Activated B cell treated with CpG ODN at 0.5 μM for 24 hours (primary cell): ENCODE measurements at regions of chr10 and their contacts with region 1.

Region 1: DNA sequence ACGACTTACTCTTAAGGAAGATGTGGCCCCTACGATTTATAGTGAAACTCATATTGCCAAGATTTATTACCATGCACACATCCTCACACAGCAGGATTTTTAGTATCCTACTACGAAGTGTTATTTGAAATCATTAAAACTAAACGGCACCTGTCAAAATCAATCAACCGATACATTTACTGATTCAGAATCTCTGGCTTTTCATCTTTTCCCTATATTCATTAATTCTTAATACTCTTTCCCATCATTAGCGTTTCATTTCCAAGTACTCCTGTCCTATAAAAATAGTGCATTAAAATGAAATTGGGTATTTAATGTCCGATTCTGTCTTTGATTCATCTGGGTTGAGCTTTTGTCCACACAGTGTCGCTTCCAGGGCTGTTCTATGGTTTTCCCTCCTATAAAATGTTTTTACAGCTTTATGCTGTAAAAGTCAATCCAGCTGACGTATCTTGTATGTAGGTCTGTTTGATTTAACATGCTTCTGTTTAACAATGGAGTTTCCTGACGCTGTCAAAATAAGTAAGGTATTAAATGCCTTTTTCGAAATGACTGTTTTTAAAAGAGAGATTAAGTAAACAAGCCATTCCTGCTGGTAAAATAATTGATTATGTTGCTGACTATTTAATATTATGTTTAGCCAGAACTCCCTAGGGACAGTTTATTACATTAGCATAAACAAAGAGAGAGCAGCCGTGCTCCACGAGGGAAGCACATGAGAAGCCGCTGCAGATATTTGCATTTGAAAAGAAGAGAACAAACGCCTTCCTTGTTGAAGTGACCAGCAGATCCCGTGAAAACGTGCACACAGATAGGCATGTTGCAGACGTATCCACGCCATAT is 22.3 kb upstream of the SFMBT2 start:
- DNase-seq: no peak
- ATAC-seq: no peak
- H3K4me3 Mint-ChIP-seq: no peak overlapping the region
- H3K27ac Mint-ChIP-seq: no peak overlapping the region
- H3K4me1 Mint-ChIP-seq: peaks cover 8% of the 10 kb centered on the region
- H3K27me3 Mint-ChIP-seq: no peaks in the 10 kb centered on the region
- CTCF ChIP-seq: no peak

Region 2: GRCh38 chr10:7179536-7179935 is 253.6 kb before region 1 on chr10:
- CTCF ChIA-PET with region 1: no interaction called
- POLR2A ChIA-PET with region 1: interaction called, 12 read pairs
- intact Hi-C with region 1: no loop called
- DNase-seq: no peak
- ATAC-seq: no peak
- H3K4me3 Mint-ChIP-seq: no peak overlapping the region
- H3K27ac Mint-ChIP-seq: no peak overlapping the region
- H3K4me1 Mint-ChIP-seq: peaks cover 12% of the 10 kb centered on the region
- H3K27me3 Mint-ChIP-seq: no peaks in the 10 kb centered on the region
- CTCF ChIP-seq: no peak